Activated B cell treated with CpG ODN at 0.5 μM for 24 hours (primary cell): ENCODE measurements at regions of chr1 and their contacts with region 1.

Region 1: DNA sequence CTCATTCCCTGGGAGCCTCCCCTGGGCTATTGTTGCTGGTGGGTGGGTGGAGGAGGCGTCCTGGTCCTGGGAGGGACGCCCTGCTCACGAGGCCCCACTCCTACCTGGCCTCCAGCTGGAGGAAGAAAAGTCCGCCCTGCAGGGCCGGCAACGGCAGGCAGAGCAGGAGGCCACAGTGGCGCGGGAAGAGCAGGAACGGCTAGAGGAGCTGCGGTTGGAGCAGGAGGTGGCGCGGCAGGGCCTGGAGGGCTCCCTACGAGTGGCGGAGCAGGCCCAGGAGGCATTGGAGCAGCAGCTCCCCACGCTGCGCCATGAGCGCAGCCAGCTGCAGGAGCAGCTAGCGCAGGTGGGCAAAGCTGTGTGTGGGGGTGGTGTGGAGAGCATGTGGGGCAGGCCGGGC is 24.9 kb downstream of the CROCC start:
- DNase-seq: no peak
- ATAC-seq: no peak
- H3K4me3 Mint-ChIP-seq: no peak overlapping the region
- H3K27ac Mint-ChIP-seq: no peak overlapping the region
- H3K4me1 Mint-ChIP-seq: peaks cover 2% of the 10 kb centered on the region
- H3K27me3 Mint-ChIP-seq: no peaks in the 10 kb centered on the region
- CTCF ChIP-seq: no peak

Region 2: DNA sequence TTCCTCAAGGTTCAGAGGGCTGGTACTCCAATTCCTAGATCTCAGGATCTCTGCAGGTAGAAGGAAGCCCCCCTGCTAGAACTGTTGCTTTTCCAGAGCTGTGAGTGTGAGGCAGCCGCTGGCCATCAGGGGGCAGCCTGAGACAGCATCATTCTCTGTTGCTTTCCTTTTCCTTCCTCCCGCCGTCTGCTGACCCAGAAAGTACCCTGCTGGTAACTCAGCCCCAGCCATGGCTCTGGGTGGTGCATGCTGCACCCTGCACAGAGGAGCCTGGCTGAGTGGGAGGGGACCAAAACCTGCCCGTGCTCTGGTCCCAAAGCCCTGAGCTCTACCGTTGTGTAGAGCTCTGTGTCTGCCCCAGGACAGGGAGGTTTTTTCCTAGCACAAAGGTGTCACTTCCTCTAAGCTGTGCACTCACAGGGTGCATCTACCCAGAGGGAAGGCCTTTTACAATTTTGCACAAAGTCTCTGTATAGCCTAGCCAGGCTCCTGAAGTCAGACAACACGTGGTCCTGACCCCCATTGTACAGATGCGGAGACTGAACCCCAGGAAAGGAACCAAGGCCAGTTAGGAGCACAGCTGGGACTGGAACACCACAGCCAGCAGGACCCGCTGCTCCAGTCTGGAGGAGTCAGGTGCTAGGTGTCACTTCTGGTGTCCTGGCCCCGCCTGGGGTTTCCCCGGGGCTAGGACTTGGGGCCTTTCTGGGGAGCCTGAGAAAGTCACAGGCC is 867.6 kb before region 1 on chr1:
- CTCF ChIA-PET with region 1: interaction called, 3 read pairs
- POLR2A ChIA-PET with region 1: no interaction called
- intact Hi-C with region 1: loop called (anchors 2 kb)
- DNase-seq: peak; percentile 63
- ATAC-seq: peak; percentile 86
- H3K4me3 Mint-ChIP-seq: peak overlapping the region; percentile 75
- H3K27ac Mint-ChIP-seq: no peak overlapping the region
- H3K4me1 Mint-ChIP-seq: peaks cover 9% of the 10 kb centered on the region
- H3K27me3 Mint-ChIP-seq: peaks cover 6% of the 10 kb centered on the region
- CTCF ChIP-seq: peak; percentile 27

Region 3: DNA sequence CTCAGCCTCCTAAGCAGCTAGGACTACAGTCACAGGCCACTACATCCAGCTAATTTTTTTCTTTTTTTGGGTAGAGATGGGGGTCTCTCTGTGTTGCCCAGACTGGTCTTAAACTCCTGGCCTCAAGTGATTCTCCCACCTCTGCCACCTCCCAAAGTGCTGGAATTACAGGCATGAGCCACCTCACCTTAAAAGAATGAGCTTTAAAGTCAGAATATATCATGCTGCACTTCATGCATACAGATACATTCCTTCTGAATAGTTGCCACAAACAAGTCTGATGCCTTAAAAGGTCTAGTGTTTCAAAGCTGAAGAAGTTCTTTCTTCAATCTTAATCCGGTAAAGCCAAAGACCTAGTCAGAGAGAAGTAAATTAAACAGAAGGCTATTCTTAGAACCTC is 685.8 kb before region 1 on chr1:
- CTCF ChIA-PET with region 1: no interaction called
- POLR2A ChIA-PET with region 1: no interaction called
- intact Hi-C with region 1: no loop called
- DNase-seq: no peak
- ATAC-seq: no peak
- H3K4me3 Mint-ChIP-seq: no peak overlapping the region
- H3K27ac Mint-ChIP-seq: no peak overlapping the region
- H3K4me1 Mint-ChIP-seq: no peaks in the 10 kb centered on the region
- H3K27me3 Mint-ChIP-seq: no peaks in the 10 kb centered on the region
- CTCF ChIP-seq: no peak

Region 4: GRCh38 chr1:16613185-16614147 is 333.2 kb before region 1 on chr1 and contains the start of gene NBPF1:
- CTCF ChIA-PET with region 1: interaction called, 13 read pairs
- POLR2A ChIA-PET with region 1: interaction called, 13 read pairs
- intact Hi-C with region 1: loop called (anchors 1 kb)
- DNase-seq: peak; percentile 98
- ATAC-seq: peak; percentile 97
- H3K4me3 Mint-ChIP-seq: no peak within 1 kb of the TSS
- H3K27ac Mint-ChIP-seq: no peak within 1 kb of the TSS
- H3K4me1 Mint-ChIP-seq: no peaks in the 10 kb centered on the region
- H3K27me3 Mint-ChIP-seq: no peaks in the 10 kb centered on the region
- CTCF ChIP-seq: no peak
- total RNA-seq, gene NBPF1: 20.0 and 20.2 TPM in 2 replicates

Region 5: DNA sequence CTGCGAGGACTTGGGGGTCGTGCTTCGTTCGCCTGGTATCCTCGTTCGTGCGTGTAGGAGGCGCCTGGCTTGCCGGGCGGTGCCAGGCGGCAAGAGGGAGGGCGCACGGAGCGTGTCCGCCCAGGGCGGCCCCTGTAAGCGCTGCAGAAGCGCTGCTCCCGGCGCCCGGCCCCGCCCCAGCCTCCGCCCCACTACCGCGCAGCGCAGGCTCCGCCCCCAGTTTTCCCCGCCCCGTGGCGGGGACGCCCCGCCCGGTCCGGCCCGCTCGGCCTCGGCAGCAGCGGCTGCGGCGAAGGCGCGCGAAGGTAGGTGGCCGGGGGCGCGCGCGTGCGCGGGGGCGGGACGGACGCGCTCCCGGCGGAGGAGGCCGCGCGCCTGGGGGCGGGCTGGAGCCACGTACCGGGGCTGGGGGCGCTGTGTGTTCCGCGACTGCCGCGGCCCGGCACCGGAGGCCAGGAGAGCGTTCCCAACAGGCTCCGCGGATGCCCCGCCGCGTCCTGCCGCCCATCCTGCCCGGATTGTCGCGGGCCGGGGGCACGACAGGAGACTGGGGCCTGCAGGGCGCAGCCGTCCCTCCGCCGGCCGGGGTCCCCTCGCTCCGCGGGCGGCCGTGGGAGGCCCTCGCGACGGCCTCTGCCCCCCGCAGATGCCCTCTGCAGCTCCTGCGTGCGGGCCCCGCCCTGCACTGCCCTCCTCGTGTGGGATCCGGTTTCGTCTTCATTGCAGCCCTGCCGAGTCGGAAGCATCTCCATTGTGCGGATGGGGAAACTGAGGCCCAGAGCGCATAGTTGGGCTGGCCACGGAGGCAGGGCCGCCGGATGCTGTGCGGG is 32.6 kb before region 1 on chr1:
- CTCF ChIA-PET with region 1: no interaction called
- POLR2A ChIA-PET with region 1: no interaction called
- intact Hi-C with region 1: no loop called
- DNase-seq: peak; percentile 89
- ATAC-seq: peak; percentile 98
- H3K4me3 Mint-ChIP-seq: peak overlapping the region; percentile 84
- H3K27ac Mint-ChIP-seq: peak overlapping the region; percentile 73
- H3K4me1 Mint-ChIP-seq: peaks cover 29% of the 10 kb centered on the region
- H3K27me3 Mint-ChIP-seq: no peaks in the 10 kb centered on the region
- CTCF ChIP-seq: no peak

Region 6: DNA sequence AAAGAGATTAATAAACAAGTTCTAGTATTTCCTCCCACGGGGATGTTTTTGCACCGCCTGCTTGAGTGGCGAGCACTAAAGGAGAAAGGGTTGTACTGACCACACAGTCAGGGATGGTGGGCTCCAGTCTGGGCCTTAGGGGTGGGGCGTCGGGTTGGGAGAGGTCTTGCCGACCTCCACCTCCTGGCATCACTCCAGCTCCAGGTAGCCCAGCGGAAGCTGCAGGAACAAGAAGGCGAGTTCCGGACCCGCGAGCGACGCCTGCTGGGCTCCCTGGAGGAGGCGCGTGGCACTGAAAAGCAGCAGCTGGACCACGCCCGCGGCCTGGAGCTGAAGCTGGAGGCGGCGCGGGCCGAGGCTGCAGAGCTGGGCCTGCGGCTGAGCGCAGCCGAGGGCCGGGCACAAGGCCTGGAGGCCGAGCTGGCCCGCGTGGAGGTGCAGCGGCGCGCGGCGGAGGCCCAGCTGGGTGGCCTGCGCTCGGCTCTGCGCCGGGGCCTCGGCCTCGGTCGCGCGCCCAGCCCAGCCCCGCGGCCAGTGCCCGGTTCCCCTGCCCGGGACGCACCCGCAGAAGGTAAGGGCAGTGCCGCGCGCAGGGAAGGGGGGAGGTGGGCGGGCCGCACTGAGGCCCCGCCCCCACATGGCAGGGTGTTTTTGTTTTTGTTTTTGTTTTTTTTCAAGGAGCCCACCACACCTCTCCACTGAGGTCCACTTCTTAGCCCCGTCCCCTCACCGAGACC is 14.1 kb after region 1 on chr1:
- CTCF ChIA-PET with region 1: interaction called, 18 read pairs
- POLR2A ChIA-PET with region 1: no interaction called
- intact Hi-C with region 1: no loop called
- DNase-seq: peak; percentile 70
- ATAC-seq: peak; percentile 93
- H3K4me3 Mint-ChIP-seq: peak overlapping the region; percentile 83
- H3K27ac Mint-ChIP-seq: peak overlapping the region; percentile 68
- H3K4me1 Mint-ChIP-seq: peaks cover 10% of the 10 kb centered on the region
- H3K27me3 Mint-ChIP-seq: no peaks in the 10 kb centered on the region
- CTCF ChIP-seq: no peak

Region 7: DNA sequence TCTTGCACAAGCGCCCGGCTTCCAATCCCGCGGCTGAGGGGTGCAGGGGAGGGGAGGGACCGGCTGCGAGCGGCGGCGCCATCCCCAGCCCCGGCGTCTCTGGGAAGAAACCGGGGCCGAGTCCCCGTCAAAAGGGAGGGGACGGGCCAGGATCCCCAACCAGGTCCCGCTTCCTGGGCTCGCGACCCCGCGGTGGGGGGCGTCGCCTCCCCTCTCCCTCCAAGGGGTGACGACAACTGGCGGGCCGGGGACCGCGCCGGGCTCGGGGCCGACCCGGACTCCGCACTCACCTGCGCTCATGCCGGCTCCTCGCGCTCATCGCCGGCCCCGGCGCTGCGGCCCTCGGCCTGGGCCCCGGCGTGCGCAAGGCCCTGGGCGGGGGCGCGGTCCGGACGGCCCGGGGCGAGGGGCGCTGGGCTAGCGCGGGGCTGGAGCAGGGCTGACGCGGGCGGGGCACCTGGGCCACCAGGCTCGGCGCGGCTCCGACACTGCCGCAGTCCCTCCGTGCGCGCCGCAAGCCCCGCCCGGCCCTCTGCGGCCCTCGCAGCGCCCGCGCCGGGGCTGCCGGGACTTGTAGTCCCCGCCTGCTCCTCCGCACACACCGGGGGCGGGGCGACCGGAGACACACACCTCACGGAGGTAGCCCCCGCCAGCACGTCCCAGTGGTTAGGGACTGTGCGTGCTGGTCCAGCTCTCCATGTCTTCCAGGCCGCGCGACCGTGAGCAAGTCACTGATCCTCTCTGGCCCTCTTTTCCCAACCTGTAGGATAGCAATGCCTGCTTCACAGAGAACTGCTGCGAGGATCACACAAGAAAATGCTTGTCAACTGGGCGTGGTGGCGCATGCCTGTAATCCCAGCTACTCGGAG is 65.0 kb after region 1 on chr1 and contains the start of gene ATP13A2:
- CTCF ChIA-PET with region 1: no interaction called
- POLR2A ChIA-PET with region 1: no interaction called
- intact Hi-C with region 1: no loop called
- DNase-seq: peak; percentile 87
- ATAC-seq: peak; percentile 99
- H3K4me3 Mint-ChIP-seq: peak within 1 kb of the TSS; percentile 81
- H3K27ac Mint-ChIP-seq: peak within 1 kb of the TSS; percentile 20
- H3K4me1 Mint-ChIP-seq: peaks cover 24% of the 10 kb centered on the region
- H3K27me3 Mint-ChIP-seq: no peaks in the 10 kb centered on the region
- CTCF ChIP-seq: no peak
- total RNA-seq, gene ATP13A2: 27.6 and 31.9 TPM in 2 replicates

Region 8: DNA sequence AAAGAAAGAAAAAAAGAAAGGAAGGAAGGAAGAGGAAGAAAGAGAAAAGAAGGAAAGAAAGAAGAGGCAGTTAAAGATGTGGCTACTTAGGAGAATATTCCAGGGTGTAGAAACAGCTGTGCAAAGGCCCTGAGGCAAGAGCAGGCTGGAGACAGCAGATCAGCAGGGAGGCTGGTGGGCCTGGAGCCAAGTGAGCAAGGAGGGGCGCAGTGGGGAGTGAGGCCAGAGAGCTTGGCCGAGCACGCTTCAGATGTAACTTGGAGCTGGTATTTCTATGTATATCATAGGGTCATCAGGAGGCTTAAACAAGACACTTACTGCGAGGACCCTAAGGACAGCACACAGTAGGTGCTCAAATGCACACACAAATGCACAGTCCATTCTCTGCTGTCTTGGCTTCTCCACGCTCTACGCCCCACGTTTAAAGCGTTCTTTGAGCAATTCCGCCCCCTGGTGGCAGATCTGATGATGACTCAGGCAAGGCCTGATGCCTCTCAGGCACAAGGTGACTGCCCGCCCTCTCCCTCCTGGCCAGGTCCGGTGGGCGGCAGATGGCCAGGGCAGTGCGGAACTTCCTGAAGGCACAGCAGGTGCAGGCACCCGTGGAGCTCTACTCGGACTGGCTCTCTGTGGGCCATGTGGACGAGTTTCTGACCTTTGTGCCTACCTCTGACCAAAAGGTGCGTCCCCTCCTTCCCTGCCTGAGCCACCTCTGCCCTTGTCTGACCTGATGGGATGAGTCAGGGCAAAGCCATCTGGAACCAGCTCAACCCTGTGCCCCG is 290.3 kb after region 1 on chr1:
- CTCF ChIA-PET with region 1: no interaction called
- POLR2A ChIA-PET with region 1: no interaction called
- intact Hi-C with region 1: loop called (anchors 1 kb)
- DNase-seq: peak; percentile 80
- ATAC-seq: peak; percentile 70
- H3K4me3 Mint-ChIP-seq: no peak overlapping the region
- H3K27ac Mint-ChIP-seq: no peak overlapping the region
- H3K4me1 Mint-ChIP-seq: peaks cover 21% of the 10 kb centered on the region
- H3K27me3 Mint-ChIP-seq: no peaks in the 10 kb centered on the region
- CTCF ChIP-seq: peak; percentile 47

Region 9: DNA sequence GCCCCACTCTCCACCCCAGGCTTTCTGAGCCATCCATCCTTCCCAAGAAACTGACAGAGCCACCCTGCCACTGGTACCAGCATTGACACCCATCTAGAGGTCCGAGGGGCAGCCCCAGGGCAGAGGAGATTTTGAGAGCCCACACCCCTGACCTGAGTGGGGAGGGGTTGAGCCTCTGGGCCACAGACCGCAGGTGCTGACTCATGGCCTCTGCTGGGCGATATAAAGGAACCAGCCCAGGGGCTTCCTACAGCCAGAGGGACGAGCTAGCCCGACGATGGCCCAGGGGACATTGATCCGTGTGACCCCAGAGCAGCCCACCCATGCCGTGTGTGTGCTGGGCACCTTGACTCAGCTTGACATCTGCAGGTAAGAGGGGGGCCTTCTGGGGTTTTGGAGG is 361.3 kb after region 1 on chr1 and contains the start of gene PADI4:
- CTCF ChIA-PET with region 1: no interaction called
- POLR2A ChIA-PET with region 1: no interaction called
- intact Hi-C with region 1: no loop called
- DNase-seq: no peak
- ATAC-seq: no peak
- H3K4me3 Mint-ChIP-seq: no peak within 1 kb of the TSS
- H3K27ac Mint-ChIP-seq: no peak within 1 kb of the TSS
- H3K4me1 Mint-ChIP-seq: no peaks in the 10 kb centered on the region
- H3K27me3 Mint-ChIP-seq: peaks cover 26% of the 10 kb centered on the region
- CTCF ChIP-seq: no peak
- total RNA-seq, gene PADI4: 0.29 and 0.42 TPM in 2 replicates